ENCODE measurements at regions of chr17 and their contacts with region 1.

Region 1: GRCh38 chr17:61412143-61412859 is 12.7 kb downstream of the TBX2 start:
- DNase-seq: peak; percentile 79 to 89
- ATAC-seq: peak; percentile 72 to 88 (median 76)
- H3K4me3 ChIP-seq: peak overlapping the region; percentile 2 to 81 (median 63)
- H3K27ac ChIP-seq: peak overlapping the region; percentile 41 to 90 (median 84)
- H3K4me1 ChIP-seq: peaks cover 8 to 82% (median 62%) of the 10 kb centered on the region in 9 donors
- H3K27me3 ChIP-seq: peaks cover 0 to 64% (median 24%) of the 10 kb centered on the region in 7 donors
- CTCF ChIP-seq: peak; percentile 97 to 100 (median 99)

Region 2: DNA sequence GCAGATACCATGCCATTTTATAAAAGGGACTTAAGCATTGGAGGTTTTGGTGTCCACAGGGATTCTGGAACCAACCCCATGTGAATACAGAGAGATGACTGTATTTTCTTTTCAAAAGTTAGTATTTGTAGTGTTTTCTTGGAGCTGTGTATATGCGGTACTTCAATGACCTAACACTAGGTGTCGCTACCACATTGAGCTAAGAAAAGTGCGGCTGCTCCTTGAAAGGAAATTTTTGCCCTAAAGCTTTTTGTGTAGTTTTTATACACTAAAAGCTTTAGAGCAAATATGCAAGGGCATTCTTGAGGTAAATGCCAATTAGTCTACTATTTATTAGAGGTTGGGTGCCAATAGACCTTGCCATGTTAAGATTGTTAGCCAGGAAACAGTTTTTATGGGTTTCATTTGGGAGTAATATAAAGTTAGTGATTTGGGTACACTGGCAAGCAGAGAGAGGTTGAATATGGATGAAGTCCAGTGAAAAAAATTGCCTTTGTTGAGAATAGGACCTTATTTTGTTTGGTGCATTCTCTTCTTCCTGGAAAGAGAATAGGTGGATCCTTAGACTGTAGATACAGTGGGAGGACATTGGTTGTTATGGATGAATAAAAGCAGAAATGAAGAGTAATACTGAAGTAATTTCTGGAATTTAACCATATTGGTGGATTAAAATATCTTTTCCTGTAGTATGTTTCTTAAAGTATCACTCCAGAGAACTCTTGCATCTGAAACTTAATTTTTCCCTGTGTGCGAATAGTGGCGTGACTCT is 691.4 kb before region 1 on chr17:
- intact Hi-C with region 1: loop called in 5 of 10 experiments (anchors 2 to 10 kb)
- DNase-seq: peak in 1 of 2 donors; percentile 24
- ATAC-seq: peak in 2 of 8 donors; percentile 42 to 59
- H3K4me3 ChIP-seq: no peak overlapping the region
- H3K27ac ChIP-seq: no peak overlapping the region
- H3K4me1 ChIP-seq: peaks cover 0 to 5% (median 0%) of the 10 kb centered on the region in 9 donors
- H3K27me3 ChIP-seq: no peaks in the 10 kb centered on the region
- CTCF ChIP-seq: peak; percentile 77 to 94 (median 89)

Region 3: GRCh38 chr17:61259360-61259759 is 152.9 kb before region 1 on chr17:
- intact Hi-C with region 1: loop called in 1 of 10 experiments (anchors 5 kb)
- DNase-seq: no peak
- ATAC-seq: no peak
- H3K4me3 ChIP-seq: no peak overlapping the region
- H3K27ac ChIP-seq: peak overlapping the region; percentile 4 to 85 (median 66)
- H3K4me1 ChIP-seq: peaks cover 0 to 31% (median 19%) of the 10 kb centered on the region in 9 donors
- H3K27me3 ChIP-seq: no peaks in the 10 kb centered on the region
- CTCF ChIP-seq: no peak

Region 4: GRCh38 chr17:61837175-61838051 is 425.1 kb after region 1 on chr17:
- intact Hi-C with region 1: loop called in 9 of 10 experiments (anchors 5 to 10 kb)
- DNase-seq: peak; percentile 19 to 24
- ATAC-seq: no peak
- H3K4me3 ChIP-seq: no peak overlapping the region
- H3K27ac ChIP-seq: no peak overlapping the region
- H3K4me1 ChIP-seq: no peaks in the 10 kb centered on the region
- H3K27me3 ChIP-seq: no peaks in the 10 kb centered on the region
- CTCF ChIP-seq: peak in 8 of 9 donors; percentile 24 to 81 (median 69)

Measured in heart right ventricle (tissue), 16 donors.